ENCODE measurements at regions of chr1 and their contacts with region 1.

Region 1: DNA sequence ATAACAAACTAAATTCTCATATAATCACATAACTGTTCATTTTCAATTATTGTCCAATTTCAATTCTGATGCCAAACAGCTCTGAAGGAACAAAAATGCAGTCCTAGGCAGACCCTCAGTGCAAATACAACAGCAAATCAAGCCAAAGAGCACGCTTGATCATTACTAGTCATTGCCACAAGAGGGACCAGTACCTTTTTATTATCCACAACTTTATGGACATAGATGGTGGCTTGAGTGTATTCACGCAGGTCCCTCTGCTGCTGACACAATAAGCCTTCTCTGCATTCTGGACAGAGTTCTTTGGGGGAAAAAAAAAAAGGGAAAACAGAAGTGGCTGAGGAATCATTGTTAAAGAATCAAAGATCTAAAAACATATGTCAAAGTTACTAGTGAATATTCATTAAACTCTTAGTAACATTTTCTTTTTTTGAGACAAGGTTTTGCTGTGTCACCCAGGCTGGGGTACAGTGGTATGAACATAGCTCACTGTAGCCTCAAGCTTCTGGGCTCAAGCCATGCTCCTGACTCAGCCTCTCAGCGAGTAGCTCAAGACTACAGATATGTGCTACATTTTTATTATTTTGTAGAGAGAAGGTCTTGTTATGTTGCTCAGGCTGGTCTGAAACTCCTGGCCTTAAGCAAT is 34.3 kb upstream of the RAP1GAP start:
- DNase-seq: no peak
- H3K4me3 Mint-ChIP-seq: no peak overlapping the region
- H3K27ac Mint-ChIP-seq: no peak overlapping the region
- H3K4me1 Mint-ChIP-seq: peaks cover 12% of the 10 kb centered on the region
- H3K27me3 Mint-ChIP-seq: no peaks in the 10 kb centered on the region

Region 2: DNA sequence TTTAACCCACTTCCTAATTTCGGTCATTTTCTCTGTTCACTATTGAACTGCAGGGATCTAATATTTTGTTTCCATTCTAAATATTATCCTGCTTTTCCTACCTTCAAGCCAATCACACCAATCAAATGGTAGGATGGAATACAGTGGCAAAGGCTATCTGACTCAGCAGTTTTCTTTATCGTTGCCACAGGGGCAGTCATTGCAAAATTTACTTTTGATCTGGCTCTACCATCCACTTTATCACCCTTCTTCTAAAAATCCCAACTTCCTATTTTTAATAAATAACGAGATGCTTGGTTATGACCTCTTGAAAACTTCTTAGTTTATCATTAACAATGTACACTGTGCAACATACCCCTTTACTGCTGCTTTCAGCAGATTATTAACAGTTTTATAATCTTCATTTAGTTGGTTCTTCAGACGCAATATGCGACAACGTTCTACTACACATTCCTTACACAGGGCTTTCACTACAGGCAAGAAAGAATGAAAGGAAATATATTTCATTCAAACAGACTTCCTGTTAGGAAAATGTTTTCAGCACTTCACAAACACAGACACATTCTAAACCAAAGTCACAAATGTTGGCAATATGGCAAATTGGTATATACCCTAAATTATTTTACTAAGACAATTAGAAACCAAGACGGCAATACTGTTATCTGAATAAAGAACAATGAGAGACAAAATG is 18.0 kb after region 1 on chr1:
- intact Hi-C with region 1: loop called (anchors 2 kb)
- DNase-seq: no peak
- H3K4me3 Mint-ChIP-seq: no peak overlapping the region
- H3K27ac Mint-ChIP-seq: no peak overlapping the region
- H3K4me1 Mint-ChIP-seq: no peaks in the 10 kb centered on the region
- H3K27me3 Mint-ChIP-seq: no peaks in the 10 kb centered on the region

Region 3: GRCh38 chr1:21764615-21765423 is 61.4 kb after region 1 on chr1:
- intact Hi-C with region 1: loop called (anchors 10 kb)
- DNase-seq: no peak
- H3K4me3 Mint-ChIP-seq: no peak overlapping the region
- H3K27ac Mint-ChIP-seq: no peak overlapping the region
- H3K4me1 Mint-ChIP-seq: peaks cover 44% of the 10 kb centered on the region
- H3K27me3 Mint-ChIP-seq: no peaks in the 10 kb centered on the region

Region 4: GRCh38 chr1:21782868-21783678 is 79.6 kb after region 1 on chr1 and contains the start of gene USP48:
- intact Hi-C with region 1: no loop called
- DNase-seq: peak; percentile 98
- H3K4me3 Mint-ChIP-seq: peak within 1 kb of the TSS; percentile 96
- H3K27ac Mint-ChIP-seq: peak within 1 kb of the TSS; percentile 100
- H3K4me1 Mint-ChIP-seq: peaks cover 19% of the 10 kb centered on the region
- H3K27me3 Mint-ChIP-seq: peaks cover 4% of the 10 kb centered on the region
- total RNA-seq, gene USP48: 101 TPM in 2 replicates

Region 5: GRCh38 chr1:21801100-21801499 is 97.7 kb after region 1 on chr1:
- intact Hi-C with region 1: no loop called
- DNase-seq: no peak
- H3K4me3 Mint-ChIP-seq: no peak overlapping the region
- H3K27ac Mint-ChIP-seq: no peak overlapping the region
- H3K4me1 Mint-ChIP-seq: no peaks in the 10 kb centered on the region
- H3K27me3 Mint-ChIP-seq: peaks cover 1% of the 10 kb centered on the region